ENCODE measurements at regions of chr2 and their contacts with region 1.

Region 1: DNA sequence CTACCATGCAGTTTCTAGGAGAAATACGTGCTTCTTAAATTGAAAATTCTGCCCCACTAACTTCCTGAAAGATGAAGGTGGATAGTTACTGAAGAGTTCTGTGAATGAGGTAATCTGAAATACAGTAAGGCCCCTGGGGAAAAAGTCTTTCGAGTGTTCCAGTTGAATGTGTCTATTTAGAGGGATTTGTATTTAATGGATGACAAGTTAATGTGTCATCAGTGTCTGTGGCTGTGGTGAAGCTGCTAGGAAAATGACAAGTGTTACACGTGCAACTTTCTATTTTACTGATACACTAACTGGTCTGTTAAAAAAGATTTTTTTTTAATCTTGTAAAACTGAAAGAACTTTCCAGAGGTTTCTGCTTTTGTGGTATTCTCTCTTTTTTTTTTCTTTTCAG is 384.6 kb downstream of the STK39 start:
- DNase-seq: peak; percentile 30
- H3K4me3 Mint-ChIP-seq: no peak overlapping the region
- H3K27ac Mint-ChIP-seq: peak overlapping the region; percentile 39
- H3K4me1 Mint-ChIP-seq: peaks cover 15% of the 10 kb centered on the region
- H3K27me3 Mint-ChIP-seq: peaks cover 8% of the 10 kb centered on the region

Region 2: DNA sequence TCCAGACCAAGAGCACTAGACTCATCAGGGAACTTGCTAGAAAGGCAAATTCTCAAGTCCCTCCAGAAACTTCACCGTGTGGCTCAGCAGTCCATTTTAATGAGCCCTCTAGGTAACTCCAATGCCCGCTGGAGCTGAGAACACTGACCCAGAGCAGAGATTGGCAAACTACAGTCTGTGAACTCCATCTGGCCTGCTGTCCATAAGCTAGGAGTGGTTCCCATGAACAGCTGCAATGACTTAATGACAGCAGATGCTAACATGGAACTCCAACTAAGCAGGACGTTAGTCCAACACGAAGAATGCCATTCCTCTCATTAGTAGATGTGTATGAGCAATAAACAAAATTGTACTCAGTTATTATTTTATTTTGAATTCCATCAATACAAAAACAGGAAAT is 12.7 kb after region 1 on chr2:
- CTCF ChIA-PET with region 1: no interaction called
- intact Hi-C with region 1: no loop called
- DNase-seq: no peak
- H3K4me3 Mint-ChIP-seq: no peak overlapping the region
- H3K27ac Mint-ChIP-seq: no peak overlapping the region
- H3K4me1 Mint-ChIP-seq: no peaks in the 10 kb centered on the region
- H3K27me3 Mint-ChIP-seq: peaks cover 8% of the 10 kb centered on the region

Region 3: DNA sequence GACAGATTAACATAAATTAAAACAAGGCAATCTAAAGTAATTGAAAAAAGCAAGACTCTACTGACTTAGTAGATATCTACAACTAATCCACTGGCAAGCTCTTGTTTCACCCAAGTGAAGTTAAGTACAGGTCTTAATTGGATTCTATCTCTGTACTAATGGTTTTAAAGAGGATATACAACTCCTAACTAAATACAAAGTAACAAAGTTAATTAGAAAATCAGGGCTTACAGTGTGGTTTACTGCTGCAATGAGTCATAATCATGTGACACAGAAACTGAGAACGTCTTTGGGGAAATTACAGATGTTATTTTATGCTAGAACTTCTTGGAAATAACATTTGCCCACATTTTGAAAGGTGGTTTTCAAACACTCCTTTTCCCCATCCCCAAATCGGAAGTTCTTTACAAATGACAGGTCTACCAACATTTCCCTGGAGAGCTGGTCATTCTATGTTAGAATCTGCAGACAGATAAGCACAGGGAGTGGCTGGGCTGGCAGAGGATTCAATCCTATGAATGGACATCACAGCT is 139.3 kb after region 1 on chr2:
- CTCF ChIA-PET with region 1: no interaction called
- intact Hi-C with region 1: loop called (anchors 2 kb)
- DNase-seq: no peak
- H3K4me3 Mint-ChIP-seq: no peak overlapping the region
- H3K27ac Mint-ChIP-seq: peak overlapping the region; percentile 34
- H3K4me1 Mint-ChIP-seq: peaks cover 13% of the 10 kb centered on the region
- H3K27me3 Mint-ChIP-seq: no peaks in the 10 kb centered on the region